Mammary epithelial cell (primary cell): ENCODE measurements at regions of chr1 and their contacts with region 1.

Region 1: DNA sequence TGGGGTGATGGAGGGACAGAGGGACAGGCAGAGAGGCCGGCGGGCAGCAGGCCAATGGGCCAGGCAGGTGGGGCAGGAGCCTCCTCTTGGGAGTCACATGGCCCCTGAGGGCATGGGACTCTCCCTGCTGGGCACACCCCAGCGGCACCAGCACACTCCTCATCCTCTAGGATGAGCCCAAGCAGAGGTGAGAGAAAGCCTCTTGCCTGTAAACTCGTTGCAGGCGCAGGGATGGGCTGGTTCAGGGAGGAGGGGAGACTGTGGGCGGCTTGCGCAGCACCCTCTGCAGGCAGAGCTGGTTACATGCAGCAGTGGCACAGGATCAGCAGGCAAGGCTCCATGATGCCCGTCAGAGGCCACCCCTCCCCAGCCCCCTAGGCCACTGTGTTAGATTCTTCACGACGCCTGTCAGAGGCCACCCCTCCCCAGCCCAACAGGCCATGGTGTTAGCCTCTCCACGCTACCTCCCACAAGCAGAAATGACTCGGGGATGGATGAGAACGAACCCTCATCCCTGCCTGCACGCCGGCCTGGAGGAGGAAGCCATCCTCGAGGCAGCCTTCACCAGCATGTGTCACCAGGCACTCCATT is 209.7 kb upstream of the VAMP3 start:
- DNase-seq: no peak
- H3K4me3 ChIP-seq: no peak overlapping the region
- H3K27ac ChIP-seq: no peak overlapping the region
- H3K4me1 ChIP-seq: no peaks in the 10 kb centered on the region
- H3K27me3 ChIP-seq: peaks cover 4% of the 10 kb centered on the region
- CTCF ChIP-seq: peak in 1 of 2 donors; percentile 21

Region 2: GRCh38 chr1:7366955-7367665 is 194.3 kb before region 1 on chr1:
- CTCF ChIA-PET with region 1: no interaction called
- dilution Hi-C with region 1: no loop called
- in situ Hi-C with region 1: no loop called
- intact Hi-C with region 1: no loop called
- DNase-seq: no peak
- H3K4me3 ChIP-seq: no peak overlapping the region
- H3K27ac ChIP-seq: no peak overlapping the region
- H3K4me1 ChIP-seq: no peaks in the 10 kb centered on the region
- H3K27me3 ChIP-seq: no peaks in the 10 kb centered on the region
- CTCF ChIP-seq: no peak

Region 3: DNA sequence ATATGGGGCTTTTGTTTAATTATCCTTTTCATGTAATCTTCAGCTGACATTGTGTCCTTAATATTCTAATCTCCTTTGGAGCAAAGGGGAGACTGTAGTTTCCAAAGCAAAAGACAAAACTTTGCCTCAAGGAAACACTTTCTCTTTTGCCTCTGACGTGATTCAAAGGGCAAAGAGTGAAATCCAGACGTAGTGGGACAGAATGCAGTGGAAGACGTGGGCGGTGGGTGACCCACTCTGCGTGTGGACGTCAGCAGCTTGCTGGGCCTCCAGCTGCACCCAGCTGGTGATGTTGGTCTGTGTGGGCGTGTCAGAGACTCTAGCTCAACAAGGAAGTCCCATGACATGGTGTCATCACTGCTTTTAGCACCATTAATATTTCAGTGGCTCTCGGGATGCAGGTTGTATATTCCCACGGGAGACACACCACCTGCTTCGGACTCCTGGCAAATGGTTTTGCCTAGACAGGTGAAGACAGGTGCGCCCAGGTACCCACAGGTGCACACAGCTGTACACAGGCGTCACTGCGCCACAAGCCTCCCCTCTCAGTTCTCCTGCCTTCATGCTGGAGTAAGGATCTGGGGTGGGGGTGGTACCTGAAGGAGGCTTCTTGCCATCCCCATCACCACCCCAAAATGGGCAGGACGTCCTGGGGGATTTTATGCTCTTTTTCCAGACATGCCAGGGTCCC is 82.5 kb before region 1 on chr1:
- CTCF ChIA-PET with region 1: no interaction called
- dilution Hi-C with region 1: loop called (anchors 5 kb)
- in situ Hi-C with region 1: no loop called
- intact Hi-C with region 1: no loop called
- DNase-seq: peak; percentile 55
- H3K4me3 ChIP-seq: no peak overlapping the region
- H3K27ac ChIP-seq: no peak overlapping the region
- H3K4me1 ChIP-seq: peaks cover 2% of the 10 kb centered on the region
- H3K27me3 ChIP-seq: no peaks in the 10 kb centered on the region
- CTCF ChIP-seq: no peak

Region 4: GRCh38 chr1:7516341-7516740 is 45.1 kb before region 1 on chr1:
- CTCF ChIA-PET with region 1: no interaction called
- dilution Hi-C with region 1: loop called (anchors 5 kb)
- in situ Hi-C with region 1: no loop called
- intact Hi-C with region 1: no loop called
- DNase-seq: no peak
- H3K4me3 ChIP-seq: no peak overlapping the region
- H3K27ac ChIP-seq: no peak overlapping the region
- H3K4me1 ChIP-seq: no peaks in the 10 kb centered on the region
- H3K27me3 ChIP-seq: no peaks in the 10 kb centered on the region
- CTCF ChIP-seq: no peak

Region 5: DNA sequence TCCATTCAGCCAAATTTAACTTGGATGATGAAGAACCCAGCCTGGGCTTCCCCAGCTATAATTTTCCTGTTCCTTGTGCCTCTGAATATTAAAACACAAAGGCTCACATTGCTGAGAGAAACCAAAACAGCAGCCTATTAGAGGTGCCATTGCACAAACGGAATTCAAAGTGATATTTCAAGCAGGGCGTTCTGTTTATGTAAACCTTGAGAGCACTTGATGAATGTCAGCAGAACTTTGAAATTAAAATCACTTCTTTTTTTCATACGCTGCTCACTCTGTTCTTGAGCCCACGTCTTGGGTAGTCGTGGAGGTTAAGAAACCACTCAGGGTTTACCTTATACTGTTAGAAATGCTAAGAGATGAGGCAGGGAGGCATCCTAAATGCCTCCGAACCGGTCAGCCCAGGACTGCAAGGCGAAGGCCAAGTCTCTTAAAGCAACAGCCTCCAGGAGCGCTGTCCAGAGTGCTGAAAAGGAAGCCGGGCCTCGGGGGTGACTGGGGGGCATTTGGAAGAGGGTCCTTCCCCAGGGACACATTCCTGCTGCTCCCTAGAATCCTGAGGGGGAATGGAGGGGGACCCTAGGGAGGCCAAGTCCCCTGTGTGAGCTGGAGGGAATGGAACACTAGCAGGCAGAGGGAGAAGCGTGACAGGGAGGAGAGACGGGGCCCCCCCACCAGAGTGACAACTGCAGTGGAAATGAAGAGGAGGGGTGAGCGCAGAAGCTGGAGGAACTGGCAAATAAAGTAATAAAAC is 54.8 kb after region 1 on chr1:
- CTCF ChIA-PET with region 1: no interaction called
- dilution Hi-C with region 1: no loop called
- in situ Hi-C with region 1: no loop called
- intact Hi-C with region 1: no loop called
- DNase-seq: peak; percentile 12
- H3K4me3 ChIP-seq: no peak overlapping the region
- H3K27ac ChIP-seq: no peak overlapping the region
- H3K4me1 ChIP-seq: no peaks in the 10 kb centered on the region
- H3K27me3 ChIP-seq: no peaks in the 10 kb centered on the region
- CTCF ChIP-seq: no peak

Region 6: DNA sequence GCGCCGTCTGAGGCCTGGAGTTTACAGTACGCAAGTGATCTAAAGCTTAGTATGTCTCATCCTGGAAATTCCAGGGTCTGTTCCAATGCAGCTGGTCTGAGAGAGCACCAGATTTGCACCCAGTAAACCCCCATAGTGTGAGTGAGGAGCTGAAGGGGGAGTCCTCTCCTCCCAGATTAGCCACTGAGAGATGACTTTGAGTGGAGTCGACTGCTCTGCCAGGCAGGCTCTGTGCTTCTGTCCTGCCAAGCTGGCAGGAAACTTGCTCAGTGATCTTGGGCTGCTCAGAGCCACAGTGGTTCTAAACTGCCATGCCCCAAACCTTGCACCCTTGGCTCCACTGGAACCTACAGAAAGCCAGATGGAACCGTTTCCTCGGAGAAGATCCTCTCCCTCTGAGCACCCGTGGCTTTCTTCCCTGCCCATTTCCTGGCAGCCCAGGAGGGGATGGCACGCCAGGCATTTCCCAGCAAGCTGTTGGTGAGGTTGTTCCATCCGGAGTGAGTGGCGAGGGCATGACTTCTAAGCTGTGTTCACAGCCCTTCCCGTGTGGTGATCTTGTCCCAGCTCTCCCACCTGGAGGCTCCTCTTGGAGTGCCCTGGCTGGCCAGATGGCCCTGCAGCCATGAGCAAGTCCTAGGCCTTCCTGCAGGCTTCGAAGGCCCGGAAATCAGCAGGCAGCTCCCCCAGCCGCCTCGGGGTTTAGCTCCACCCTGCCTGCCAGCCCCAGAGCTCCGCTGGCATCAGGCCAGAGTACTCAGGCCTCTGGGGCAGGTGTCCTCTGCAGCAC is 83.7 kb after region 1 on chr1:
- CTCF ChIA-PET with region 1: no interaction called
- dilution Hi-C with region 1: no loop called
- in situ Hi-C with region 1: no loop called
- intact Hi-C with region 1: no loop called
- DNase-seq: peak; percentile 9
- H3K4me3 ChIP-seq: no peak overlapping the region
- H3K27ac ChIP-seq: no peak overlapping the region
- H3K4me1 ChIP-seq: peaks cover 7% of the 10 kb centered on the region
- H3K27me3 ChIP-seq: peaks cover 1% of the 10 kb centered on the region
- CTCF ChIP-seq: no peak

Region 7: GRCh38 chr1:7656557-7657215 is 95.3 kb after region 1 on chr1:
- CTCF ChIA-PET with region 1: no interaction called
- dilution Hi-C with region 1: loop called (anchors 5 kb)
- in situ Hi-C with region 1: no loop called
- intact Hi-C with region 1: no loop called
- DNase-seq: no peak
- H3K4me3 ChIP-seq: no peak overlapping the region
- H3K27ac ChIP-seq: no peak overlapping the region
- H3K4me1 ChIP-seq: no peaks in the 10 kb centered on the region
- H3K27me3 ChIP-seq: no peaks in the 10 kb centered on the region
- CTCF ChIP-seq: no peak